Cardiac septum (tissue), 1 donor: ENCODE measurements at regions of chr20 and their contacts with region 1.

Region 1: GRCh38 chr20:31822421-31823330 is 3.5 kb downstream of the MYLK2 start:
- DNase-seq: peak; percentile 93

Region 2: DNA sequence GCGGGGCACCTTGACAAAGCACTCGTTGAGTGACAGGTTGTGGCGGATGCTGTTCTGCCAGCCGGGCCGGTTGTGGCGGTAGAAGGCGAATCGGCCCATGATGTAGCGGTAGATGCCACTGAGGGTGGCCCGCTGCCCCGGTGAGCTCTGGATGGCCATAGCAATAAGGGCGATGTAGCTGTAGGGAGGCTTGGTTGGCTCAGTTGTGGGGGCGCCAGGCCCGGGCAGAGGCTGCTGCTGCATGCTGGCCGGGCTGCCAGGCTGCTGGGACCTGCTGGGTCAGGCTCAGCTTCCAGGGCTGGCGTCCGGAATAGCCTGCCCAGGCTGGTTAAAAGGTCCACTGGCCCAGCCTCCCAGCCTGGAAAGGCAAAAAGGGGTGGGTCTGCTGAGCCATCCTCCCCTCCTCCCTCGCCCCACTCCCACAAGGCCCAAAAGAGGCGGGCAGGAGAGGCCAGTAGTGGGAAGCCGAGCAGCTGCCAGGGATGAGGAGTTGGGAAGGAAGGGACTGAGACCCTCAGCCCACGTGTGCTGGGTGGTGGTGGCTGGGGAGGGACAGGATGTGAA is 22.7 kb after region 1 on chr20 and contains the start of gene FOXS1:
- intact Hi-C with region 1: loop called (anchors 2 kb)
- DNase-seq: peak; percentile 84
- total RNA-seq, gene FOXS1: 6.1 TPM

Region 3: GRCh38 chr20:32007787-32008616 is 185.3 kb after region 1 on chr20:
- intact Hi-C with region 1: no loop called
- DNase-seq: peak; percentile 84

Region 4: DNA sequence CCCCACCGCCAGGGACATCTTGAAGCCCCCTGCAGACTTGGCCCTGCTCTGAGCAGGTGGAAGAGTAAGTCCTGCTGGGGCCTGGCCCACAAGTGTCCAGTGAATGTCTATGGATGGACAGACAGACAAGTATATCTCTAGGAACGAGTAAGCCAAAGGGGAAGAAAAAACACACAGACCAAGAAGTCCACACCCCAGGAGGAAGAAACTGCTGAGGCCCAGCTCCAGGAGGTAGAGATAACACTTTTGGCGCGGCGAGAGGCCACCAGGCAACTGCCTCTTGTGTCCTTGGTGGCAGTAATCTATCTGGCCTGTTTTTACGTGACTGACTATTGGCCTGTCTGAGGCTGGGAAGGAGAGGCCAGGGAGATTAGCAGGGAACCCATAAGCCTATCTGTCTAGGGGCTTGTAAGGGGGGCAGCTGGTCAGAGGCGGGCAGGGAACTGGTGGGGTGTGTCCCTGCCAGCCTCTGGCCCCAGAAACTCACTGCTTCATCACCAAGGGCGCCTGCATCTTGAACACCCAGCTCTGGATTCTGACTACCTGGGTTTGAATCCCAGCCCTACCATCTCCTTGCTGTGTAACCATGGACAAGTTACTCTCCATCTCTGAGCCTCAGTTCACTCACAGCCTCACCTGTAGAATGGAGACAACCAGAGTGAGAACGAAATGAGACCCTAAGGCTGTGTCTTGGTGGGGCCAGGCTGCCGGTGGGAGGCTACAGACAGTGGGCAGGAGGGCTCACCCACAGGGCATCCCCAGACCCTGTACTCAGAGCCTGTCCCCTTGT is 819.8 kb after region 1 on chr20:
- intact Hi-C with region 1: loop called (anchors 5 kb)
- DNase-seq: no peak